Psoas muscle (tissue), 8 donors: ENCODE measurements at regions of chr2 and their contacts with region 1.

Region 1: DNA sequence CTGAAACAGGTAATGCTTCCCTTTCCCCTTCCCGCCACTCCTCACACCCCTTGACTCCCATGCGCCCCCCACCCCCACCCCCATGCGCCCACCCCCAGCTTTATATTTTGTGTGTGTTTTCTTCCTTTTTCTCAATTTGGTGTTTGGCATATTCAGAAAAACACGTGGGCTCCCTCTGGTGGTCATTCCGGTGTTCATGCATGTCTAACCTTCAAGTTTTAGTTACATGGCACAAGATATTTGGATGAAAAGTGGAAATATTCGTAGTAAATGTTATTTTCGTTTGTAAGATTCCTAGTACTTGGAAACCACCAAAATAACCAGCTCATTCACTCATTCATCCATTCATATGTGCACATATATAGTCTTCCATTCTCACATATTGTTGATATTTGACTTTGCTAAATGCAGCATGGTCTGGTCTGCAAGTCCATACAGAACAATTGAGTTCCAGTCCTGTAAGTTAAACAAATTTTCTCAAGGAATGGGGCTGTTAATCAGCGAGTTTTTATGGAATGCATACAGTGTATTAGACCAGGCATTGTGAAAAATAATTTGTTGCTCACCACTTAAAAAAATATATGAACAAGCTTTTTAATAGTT is 143.6 kb upstream of the MAP3K20 start:
- DNase-seq: peak; percentile 41 to 64
- ATAC-seq: peak; percentile 38 to 77 (median 49)
- H3K4me3 ChIP-seq: peak overlapping the region; percentile 33
- H3K27ac ChIP-seq: no peak overlapping the region
- H3K4me1 ChIP-seq: no peaks in the 10 kb centered on the region
- H3K27me3 ChIP-seq: no peaks in the 10 kb centered on the region
- CTCF ChIP-seq: peak; percentile 70

Region 2: GRCh38 chr2:172806493-172806892 is 125.5 kb before region 1 on chr2:
- intact Hi-C with region 1: loop called (anchors 1 to 2 kb)
- DNase-seq: no peak
- ATAC-seq: peak in 3 of 4 donors; percentile 34 to 74 (median 39)
- H3K4me3 ChIP-seq: no peak overlapping the region
- H3K27ac ChIP-seq: no peak overlapping the region
- H3K4me1 ChIP-seq: peaks cover 3% of the 10 kb centered on the region
- H3K27me3 ChIP-seq: no peaks in the 10 kb centered on the region
- CTCF ChIP-seq: peak; percentile 81

Region 3: GRCh38 chr2:172845028-172845630 is 86.9 kb before region 1 on chr2:
- intact Hi-C with region 1: no loop called
- DNase-seq: no peak
- ATAC-seq: peak in 2 of 4 donors; percentile 20 to 51
- H3K4me3 ChIP-seq: no peak overlapping the region
- H3K27ac ChIP-seq: no peak overlapping the region
- H3K4me1 ChIP-seq: no peaks in the 10 kb centered on the region
- H3K27me3 ChIP-seq: no peaks in the 10 kb centered on the region
- CTCF ChIP-seq: no peak

Region 4: GRCh38 chr2:172864182-172864581 is 67.8 kb before region 1 on chr2:
- intact Hi-C with region 1: loop called (anchors 1 to 5 kb)
- DNase-seq: peak; percentile 62 to 70
- ATAC-seq: peak; percentile 68 to 80 (median 72)
- H3K4me3 ChIP-seq: no peak overlapping the region
- H3K27ac ChIP-seq: no peak overlapping the region
- H3K4me1 ChIP-seq: peaks cover 4% of the 10 kb centered on the region
- H3K27me3 ChIP-seq: peaks cover 0 to 3% (median 0%) of the 10 kb centered on the region in 3 donors
- CTCF ChIP-seq: peak; percentile 72